ENCODE measurements at regions of chr16 and their contacts with region 1.

Region 1: DNA sequence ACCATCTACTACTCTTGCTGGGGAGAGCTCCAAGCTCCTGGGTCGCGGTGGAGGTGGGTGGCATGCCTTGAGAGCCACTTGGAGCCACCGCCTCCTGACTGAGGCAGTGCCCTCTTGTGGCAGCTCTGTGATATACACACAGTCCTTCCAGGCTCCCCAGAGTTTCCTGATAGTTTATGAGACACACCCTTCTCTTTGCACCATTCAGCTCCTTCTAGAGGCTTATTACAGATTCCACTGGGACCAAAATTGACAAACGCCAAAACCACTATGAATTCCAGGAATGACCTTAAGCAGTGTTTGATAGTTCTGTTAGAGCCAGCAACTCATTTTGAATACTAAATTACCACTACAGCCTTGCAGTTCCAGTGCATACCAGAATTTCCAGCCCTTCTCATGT is 170.1 kb upstream of the CDH13 start:
- DNase-seq: peak; percentile 57
- ATAC-seq: peak; percentile 99
- H3K4me3 ChIP-seq: no peak overlapping the region
- H3K27ac ChIP-seq: no peak overlapping the region
- H3K4me1 ChIP-seq: no peaks in the 10 kb centered on the region
- H3K27me3 ChIP-seq: peaks cover 26% of the 10 kb centered on the region
- CTCF ChIP-seq: peak; percentile 64 to 92 (median 90)
- POLR2A ChIP-seq: no peak
- RAD21 ChIP-seq: peak; percentile 63

Region 2: DNA sequence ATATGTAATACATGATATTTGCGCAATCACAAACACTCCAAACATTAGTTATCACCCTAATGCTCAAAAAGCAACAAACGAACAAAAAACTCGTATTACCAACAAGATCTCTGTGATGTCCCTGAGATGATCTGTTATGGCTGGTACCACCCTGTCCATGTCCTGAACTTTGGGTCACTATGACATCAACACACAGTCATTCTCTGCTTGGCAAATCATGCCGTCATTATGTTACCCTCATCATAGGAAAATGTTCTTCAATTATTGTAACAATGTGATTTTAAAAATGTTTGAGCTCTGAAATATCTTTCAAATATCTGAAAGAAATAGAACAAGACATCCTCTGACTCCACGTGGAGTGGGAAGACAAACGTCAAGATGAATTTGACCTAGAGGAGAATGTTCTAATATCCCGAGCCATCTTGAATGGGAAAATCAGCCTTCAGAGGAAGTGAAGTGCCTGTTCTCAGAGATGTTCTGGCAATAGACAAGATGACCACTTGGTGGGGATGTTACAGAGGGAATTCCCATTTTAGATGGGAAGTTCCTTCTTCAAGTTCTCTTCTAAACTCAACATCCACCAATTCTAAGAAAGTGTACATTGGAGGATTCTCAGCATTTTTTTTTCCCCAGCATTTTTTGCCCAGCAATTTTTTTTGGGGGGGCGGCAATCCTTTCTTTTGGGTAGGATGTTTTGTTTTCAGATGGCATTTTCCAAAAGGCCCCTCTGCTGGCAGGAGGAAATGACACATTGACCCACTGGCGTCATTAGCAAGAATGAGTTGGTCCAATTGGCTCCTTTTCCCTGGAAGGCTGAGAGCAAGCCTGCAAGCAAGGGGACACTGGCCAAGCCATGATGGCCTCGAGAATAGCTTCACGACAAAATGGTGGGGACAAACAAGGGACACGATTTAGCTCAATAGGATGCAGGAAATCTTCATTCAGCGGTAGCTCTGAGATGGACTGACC is 425.3 kb before region 1 on chr16:
- CTCF ChIA-PET with region 1: no interaction called
- POLR2A ChIA-PET with region 1: no interaction called
- RAD21 ChIA-PET with region 1: no interaction called
- intact Hi-C with region 1: loop called (anchors 5 kb)
- DNase-seq: peak; percentile 62
- ATAC-seq: peak; percentile 81
- H3K4me3 ChIP-seq: no peak overlapping the region
- H3K27ac ChIP-seq: no peak overlapping the region
- H3K4me1 ChIP-seq: peaks cover 0 to 15% of the 10 kb centered on the region in 2 experiments; a peak in 2 of 4 replicates
- H3K27me3 ChIP-seq: peaks cover 29% of the 10 kb centered on the region
- CTCF ChIP-seq: peak; percentile 75 to 79 (median 78)
- POLR2A ChIP-seq: no peak
- RAD21 ChIP-seq: peak; percentile 80

Region 3: DNA sequence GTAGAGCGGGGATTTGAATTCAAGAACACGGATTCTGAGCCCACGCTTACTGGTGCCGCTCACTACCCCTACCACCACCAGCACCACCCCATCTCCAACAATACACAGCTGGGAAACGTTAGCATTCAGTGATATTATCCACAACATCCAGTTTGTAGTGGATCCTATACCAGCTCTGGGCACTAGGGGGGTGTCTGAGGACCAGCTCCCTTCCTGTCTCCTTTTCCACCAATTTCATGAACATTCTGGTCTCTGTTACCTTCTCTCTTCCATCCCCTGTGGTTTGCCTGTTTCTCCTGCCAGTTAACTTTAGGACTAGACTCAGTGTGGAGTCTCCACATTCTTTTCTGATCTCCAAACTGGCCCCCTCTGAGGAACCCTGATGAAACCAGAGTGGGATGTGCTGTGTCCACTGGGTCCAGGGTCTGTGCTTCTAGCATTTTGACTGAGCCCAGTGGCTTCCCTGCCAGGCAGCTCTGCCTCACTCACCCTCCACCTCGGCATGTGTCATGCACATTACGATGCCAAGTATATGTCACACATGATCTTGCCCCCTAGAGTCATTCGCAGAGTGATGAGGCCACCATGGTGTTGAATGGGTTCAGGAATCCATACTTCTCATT is 16.9 kb before region 1 on chr16:
- CTCF ChIA-PET with region 1: interaction called, 16 read pairs
- POLR2A ChIA-PET with region 1: no interaction called
- RAD21 ChIA-PET with region 1: no interaction called
- intact Hi-C with region 1: no loop called
- DNase-seq: peak; percentile 12
- ATAC-seq: peak; percentile 91
- H3K4me3 ChIP-seq: no peak overlapping the region
- H3K27ac ChIP-seq: no peak overlapping the region
- H3K4me1 ChIP-seq: no peaks in the 10 kb centered on the region
- H3K27me3 ChIP-seq: peaks cover 16% of the 10 kb centered on the region
- CTCF ChIP-seq: peak in 2 of 3 experiments; percentile 65 to 67; a peak in 4 of 6 replicates
- POLR2A ChIP-seq: no peak
- RAD21 ChIP-seq: no peak

Region 4: DNA sequence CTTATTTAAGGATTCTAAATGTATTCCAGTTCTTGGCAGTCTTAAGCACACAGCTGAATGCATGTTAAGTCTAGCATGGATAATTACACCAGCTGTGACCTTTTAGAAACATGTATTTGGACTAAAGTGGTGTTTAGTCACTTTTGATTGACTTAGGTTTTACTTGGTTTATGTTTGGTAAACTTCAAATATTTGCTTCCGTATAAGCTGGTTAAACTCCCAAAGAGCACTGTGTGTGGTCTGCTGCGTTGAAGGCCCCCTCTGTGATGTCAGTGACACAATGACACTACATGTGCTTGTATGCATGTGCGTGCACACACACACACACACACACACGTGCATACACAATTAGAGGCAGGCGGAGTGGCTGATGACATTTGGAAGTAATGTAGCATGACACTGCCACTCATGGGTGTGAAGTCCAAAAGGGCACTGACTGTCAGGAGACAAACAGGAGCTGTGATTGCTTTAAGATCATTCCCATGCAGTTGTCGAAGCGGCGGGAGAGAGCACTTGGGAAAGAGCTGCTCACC is 14.0 kb after region 1 on chr16:
- CTCF ChIA-PET with region 1: interaction called, 14 read pairs
- POLR2A ChIA-PET with region 1: no interaction called
- RAD21 ChIA-PET with region 1: no interaction called
- intact Hi-C with region 1: no loop called
- DNase-seq: no peak
- ATAC-seq: no peak
- H3K4me3 ChIP-seq: no peak overlapping the region
- H3K27ac ChIP-seq: no peak overlapping the region
- H3K4me1 ChIP-seq: no peaks in the 10 kb centered on the region
- H3K27me3 ChIP-seq: peaks cover 45% of the 10 kb centered on the region; the same call in 1 of the 2 replicates
- CTCF ChIP-seq: no peak
- POLR2A ChIP-seq: no peak
- RAD21 ChIP-seq: no peak

Region 5: DNA sequence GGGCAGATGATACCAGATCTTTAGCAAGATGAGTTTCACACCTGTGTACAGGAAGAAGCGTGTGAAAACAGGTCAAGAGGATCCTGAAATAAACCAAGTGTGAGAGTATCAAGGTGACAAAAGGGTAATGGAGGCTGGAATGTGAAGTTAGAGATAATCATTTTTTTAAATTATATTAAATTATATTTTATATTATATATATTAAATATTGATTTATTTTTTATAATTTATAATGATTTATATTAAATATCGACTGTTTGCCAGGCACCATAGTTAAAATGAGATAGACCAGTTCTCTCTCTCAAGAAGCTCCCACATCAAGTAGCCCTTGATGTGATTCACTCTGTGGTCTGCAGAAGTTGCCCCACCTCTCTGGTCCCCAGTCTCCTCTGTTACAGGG is 990.9 kb after region 1 on chr16:
- CTCF ChIA-PET with region 1: no interaction called
- POLR2A ChIA-PET with region 1: no interaction called
- RAD21 ChIA-PET with region 1: no interaction called
- intact Hi-C with region 1: loop called (anchors 2 kb)
- DNase-seq: no peak
- ATAC-seq: no peak
- H3K4me3 ChIP-seq: no peak overlapping the region
- H3K27ac ChIP-seq: no peak overlapping the region
- H3K4me1 ChIP-seq: no peaks in the 10 kb centered on the region
- H3K27me3 ChIP-seq: no peaks in the 10 kb centered on the region
- CTCF ChIP-seq: no peak
- POLR2A ChIP-seq: no peak
- RAD21 ChIP-seq: no peak